Right cardiac atrium (tissue), 5 donors: ENCODE measurements at regions of chr2 and their contacts with region 1.

Region 1: GRCh38 chr2:34570266-34570872 is 971.3 kb upstream of the FAM98A start:
- DNase-seq: no peak
- ATAC-seq: peak; percentile 31 to 37
- H3K4me3 ChIP-seq: no peak overlapping the region
- H3K27ac ChIP-seq: no peak overlapping the region
- H3K4me1 ChIP-seq: no peaks in the 10 kb centered on the region
- H3K27me3 ChIP-seq: no peaks in the 10 kb centered on the region

Region 2: DNA sequence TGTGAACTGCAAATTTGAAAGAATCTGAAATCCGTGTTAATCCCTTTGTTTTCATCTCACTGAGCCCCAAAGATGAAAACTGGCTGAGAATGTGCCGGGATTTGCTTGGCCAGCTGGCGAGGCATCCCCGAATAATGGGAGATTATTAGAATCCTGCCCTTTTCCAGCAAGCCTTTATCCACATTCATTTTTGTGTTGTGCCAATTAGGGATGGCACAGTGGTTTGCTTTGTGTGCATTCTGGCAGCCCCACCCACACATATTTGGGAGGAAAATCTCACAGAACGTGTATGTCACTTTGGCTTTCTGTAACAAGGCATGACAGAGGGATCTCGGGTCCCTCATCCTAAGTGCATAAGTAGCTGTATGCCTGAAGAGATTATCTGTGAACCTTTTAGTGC is 565.4 kb before region 1 on chr2:
- intact Hi-C with region 1: loop called in 2 of 4 experiments (anchors 5 to 10 kb)
- DNase-seq: no peak
- ATAC-seq: no peak
- H3K4me3 ChIP-seq: no peak overlapping the region
- H3K27ac ChIP-seq: no peak overlapping the region
- H3K4me1 ChIP-seq: no peaks in the 10 kb centered on the region
- H3K27me3 ChIP-seq: no peaks in the 10 kb centered on the region

Region 3: GRCh38 chr2:34012715-34013302 is 557.6 kb before region 1 on chr2:
- intact Hi-C with region 1: loop called in 2 of 4 experiments (anchors 5 to 10 kb)
- DNase-seq: peak; percentile 44 to 70 (median 68)
- ATAC-seq: peak; percentile 69 to 82
- H3K4me3 ChIP-seq: no peak overlapping the region
- H3K27ac ChIP-seq: no peak overlapping the region
- H3K4me1 ChIP-seq: no peaks in the 10 kb centered on the region
- H3K27me3 ChIP-seq: no peaks in the 10 kb centered on the region

Region 4: DNA sequence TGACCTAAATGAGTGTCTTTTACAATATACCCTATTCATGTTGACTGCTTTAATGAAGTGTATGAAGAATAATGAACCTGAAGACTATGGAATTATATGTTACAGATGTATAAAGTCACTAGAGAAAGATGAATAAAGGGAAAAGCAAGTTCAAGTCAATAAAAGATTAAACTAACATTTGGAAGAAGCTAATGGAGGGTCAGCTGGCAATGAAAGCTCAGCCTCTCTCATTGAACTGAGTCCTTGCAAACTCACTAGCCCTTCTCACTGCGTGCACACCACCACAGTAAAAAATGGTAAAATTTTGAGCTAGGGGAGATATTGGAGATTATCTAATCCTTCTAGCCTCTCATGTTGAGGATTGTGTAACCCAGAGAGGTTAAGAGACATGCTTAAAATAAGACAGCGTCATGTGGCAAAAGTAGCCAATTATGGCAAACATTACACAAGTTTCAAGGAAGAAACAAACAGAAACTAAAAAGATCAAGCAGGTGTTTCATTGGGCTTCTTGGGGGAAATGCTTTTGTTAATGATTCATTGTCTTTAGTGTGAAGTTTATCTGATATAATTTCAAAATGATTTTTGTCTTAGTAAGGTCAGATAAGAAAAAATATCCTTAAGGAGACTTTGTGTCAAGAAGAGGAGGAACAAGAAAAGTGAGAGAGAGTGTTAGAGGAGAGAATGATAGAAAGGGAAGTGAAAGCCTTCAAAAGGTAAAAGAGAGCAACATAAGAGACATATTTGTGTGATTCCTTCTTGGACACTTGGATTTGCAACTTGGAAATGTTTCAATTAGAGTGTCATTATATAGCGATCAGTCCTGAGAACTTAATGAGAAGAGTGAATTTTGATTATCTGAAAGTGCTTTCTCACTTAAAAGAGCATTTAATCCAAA is 77.6 kb before region 1 on chr2:
- intact Hi-C with region 1: no loop called
- DNase-seq: no peak
- ATAC-seq: no peak
- H3K4me3 ChIP-seq: no peak overlapping the region
- H3K27ac ChIP-seq: no peak overlapping the region
- H3K4me1 ChIP-seq: no peaks in the 10 kb centered on the region
- H3K27me3 ChIP-seq: no peaks in the 10 kb centered on the region